ENCODE measurements at regions of chr3 and their contacts with region 1.

Region 1: DNA sequence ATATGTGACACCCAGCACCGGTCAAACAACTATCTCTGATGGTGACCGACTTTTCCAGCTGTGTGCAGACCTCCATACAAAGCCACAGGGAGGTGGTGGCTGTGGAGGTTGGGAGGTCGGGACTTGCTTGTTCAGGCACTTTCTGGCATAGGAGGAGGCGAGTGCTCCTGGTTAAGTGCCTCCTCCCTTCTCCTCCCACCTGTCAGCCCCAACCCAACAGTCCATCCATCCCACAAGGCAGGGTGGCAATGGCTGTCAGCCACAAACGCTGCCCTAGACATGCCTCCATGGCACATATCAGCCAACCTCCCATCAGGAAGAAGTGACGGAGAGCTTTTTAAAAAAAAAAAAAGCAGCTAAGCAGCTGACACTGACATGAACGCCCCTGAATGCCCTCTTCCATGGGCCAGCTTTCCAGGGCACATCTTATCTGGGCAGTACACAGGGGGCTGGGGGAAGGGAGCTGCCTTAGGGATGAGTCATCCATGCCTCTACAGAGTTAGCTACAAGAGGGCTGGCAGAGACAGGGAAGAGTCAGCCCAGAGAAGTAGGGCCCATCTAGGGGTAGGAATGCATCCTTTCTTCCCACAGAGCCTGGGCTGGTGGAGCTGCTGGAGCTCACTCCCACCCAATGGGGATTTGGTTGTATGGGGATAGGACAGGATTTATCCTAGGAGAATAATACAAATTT is 41.2 kb downstream of the CCDC12 start:
- DNase-seq: peak; percentile 95
- H3K4me3 ChIP-seq: no peak overlapping the region
- H3K27ac ChIP-seq: peak overlapping the region; percentile 78 to 91 (median 84)
- H3K4me1 ChIP-seq: peaks cover 0 to 97% (median 86%) of the 10 kb centered on the region in 4 donors
- H3K27me3 ChIP-seq: no peaks in the 10 kb centered on the region
- CTCF ChIP-seq: peak; percentile 50 to 82 (median 70)
- EP300 ChIP-seq: peak in 3 of 4 donors; percentile 21 to 67 (median 41)
- POLR2A ChIP-seq: no peak

Region 2: DNA sequence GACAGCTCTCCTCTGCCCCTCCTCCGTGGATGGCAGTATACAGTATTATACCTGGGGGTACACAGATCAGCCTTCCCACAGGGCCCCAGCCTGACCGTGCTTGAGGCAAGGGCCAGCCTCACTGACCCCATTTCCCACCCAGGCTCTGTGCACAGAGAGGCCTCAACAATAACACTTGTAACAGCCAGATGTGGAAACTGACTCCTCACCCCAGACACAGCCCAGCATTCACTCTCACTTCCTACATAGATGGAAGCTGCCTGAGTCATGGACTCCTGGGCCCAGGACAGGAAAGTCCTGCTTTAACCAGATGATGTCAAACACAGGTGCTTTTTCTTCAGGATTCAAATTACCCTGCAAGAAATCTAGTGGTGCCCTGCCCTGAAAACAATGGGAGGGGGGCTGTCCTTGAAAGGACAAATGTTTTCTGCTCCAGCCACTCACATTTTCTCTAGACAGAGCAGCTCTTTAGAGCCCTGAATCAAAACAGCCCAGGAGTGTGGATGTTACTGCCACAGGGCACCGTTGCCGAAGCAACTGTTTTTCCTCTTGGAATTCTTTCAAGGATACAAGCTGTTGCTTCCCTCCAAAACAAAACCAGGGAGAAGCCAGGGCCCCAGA is 24.9 kb after region 1 on chr3:
- intact Hi-C with region 1: loop called (anchors 2 kb)
- DNase-seq: no peak
- H3K4me3 ChIP-seq: no peak overlapping the region
- H3K27ac ChIP-seq: peak overlapping the region; percentile 62 to 86 (median 74)
- H3K4me1 ChIP-seq: peaks cover 0 to 73% (median 67%) of the 10 kb centered on the region in 4 donors
- H3K27me3 ChIP-seq: no peaks in the 10 kb centered on the region
- CTCF ChIP-seq: no peak
- EP300 ChIP-seq: no peak
- POLR2A ChIP-seq: no peak

Region 3: DNA sequence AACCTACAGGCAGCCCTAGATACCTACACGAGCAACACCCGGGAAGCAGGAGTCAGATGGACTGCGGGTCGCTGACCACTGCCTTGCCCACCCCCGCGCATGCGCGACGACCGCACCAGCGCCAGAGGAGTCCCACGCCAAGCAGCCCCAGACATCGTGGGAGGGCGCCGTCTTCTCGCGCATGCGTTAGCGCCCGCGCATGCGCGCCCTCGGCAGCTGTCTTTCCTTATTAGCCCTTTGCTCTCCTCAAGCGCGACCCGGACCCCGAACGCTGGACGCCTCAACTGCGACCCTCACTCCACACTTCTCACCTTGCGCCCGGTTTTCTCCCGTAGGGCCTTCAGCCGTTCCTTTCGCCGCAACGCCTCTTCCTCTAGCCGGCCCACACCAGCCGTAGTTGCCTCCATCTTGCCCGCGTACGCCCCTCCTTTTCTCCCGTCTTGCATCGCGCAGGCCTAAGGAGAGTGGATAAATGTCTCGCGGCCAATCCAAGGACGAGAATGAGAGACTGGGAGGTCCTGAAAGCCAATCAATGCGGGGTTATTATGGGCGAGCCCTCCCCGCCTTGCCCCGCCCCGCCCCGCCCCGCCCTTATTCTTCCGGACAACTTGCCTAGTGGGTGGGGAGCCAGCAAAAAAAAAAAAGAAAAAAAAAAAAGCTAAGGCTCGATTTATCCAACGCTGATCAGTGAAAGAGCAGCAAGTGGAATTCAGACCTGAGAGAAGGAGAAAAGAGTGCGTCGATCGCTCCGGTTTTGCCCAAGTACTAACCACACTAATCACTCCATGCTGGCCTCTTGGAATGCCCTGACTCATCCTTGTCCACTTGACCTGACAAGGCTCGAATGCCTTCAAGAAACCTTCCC is 41.2 kb after region 1 on chr3 and contains the start of gene CCDC12:
- intact Hi-C with region 1: loop called (anchors 1 kb)
- DNase-seq: peak; percentile 99
- H3K4me3 ChIP-seq: peak within 1 kb of the TSS; percentile 47 to 86 (median 80)
- H3K27ac ChIP-seq: peak within 1 kb of the TSS; percentile 91 to 95 (median 94)
- H3K4me1 ChIP-seq: peaks cover 0 to 71% (median 56%) of the 10 kb centered on the region in 4 donors
- H3K27me3 ChIP-seq: no peaks in the 10 kb centered on the region
- CTCF ChIP-seq: no peak
- EP300 ChIP-seq: no peak
- POLR2A ChIP-seq: peak; percentile 80 to 95
- total RNA-seq, gene CCDC12: 33.1 to 41.0 (median 36.6) TPM

Region 4: GRCh38 chr3:47009225-47010110 is 74.2 kb after region 1 on chr3:
- intact Hi-C with region 1: loop called (anchors 2 kb)
- DNase-seq: peak; percentile 97
- H3K4me3 ChIP-seq: peak overlapping the region; percentile 55 to 67 (median 57)
- H3K27ac ChIP-seq: peak overlapping the region; percentile 86 to 93 (median 90)
- H3K4me1 ChIP-seq: peaks cover 0 to 15% (median 9%) of the 10 kb centered on the region in 4 donors
- H3K27me3 ChIP-seq: no peaks in the 10 kb centered on the region
- CTCF ChIP-seq: no peak
- EP300 ChIP-seq: no peak
- POLR2A ChIP-seq: peak; percentile 85 to 87

Region 5: DNA sequence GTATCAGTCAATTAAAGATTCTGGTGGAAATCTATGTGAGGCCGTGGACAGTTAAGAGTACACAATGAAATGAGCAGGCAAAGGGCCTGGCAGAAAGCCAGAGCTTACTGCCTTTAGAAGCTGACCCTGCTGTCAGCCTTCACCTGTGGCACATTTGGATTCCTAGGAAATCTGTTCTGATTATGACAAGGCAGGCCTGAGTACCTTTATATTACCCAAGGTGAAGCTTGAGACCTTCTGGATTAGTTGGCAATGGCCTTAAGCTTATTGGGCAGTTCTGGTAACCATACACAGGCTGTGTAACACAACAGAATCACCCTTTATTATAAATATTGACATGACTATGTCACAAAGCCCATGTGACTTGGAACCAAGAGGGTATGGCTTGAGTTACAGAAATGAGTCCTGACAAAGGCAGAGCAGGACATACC is 87.3 kb after region 1 on chr3:
- intact Hi-C with region 1: no loop called
- DNase-seq: peak; percentile 66
- H3K4me3 ChIP-seq: no peak overlapping the region
- H3K27ac ChIP-seq: peak overlapping the region; percentile 30 to 51 (median 43)
- H3K4me1 ChIP-seq: peaks cover 0 to 31% (median 29%) of the 10 kb centered on the region in 4 donors
- H3K27me3 ChIP-seq: no peaks in the 10 kb centered on the region
- CTCF ChIP-seq: no peak
- EP300 ChIP-seq: no peak
- POLR2A ChIP-seq: no peak

Region 6: DNA sequence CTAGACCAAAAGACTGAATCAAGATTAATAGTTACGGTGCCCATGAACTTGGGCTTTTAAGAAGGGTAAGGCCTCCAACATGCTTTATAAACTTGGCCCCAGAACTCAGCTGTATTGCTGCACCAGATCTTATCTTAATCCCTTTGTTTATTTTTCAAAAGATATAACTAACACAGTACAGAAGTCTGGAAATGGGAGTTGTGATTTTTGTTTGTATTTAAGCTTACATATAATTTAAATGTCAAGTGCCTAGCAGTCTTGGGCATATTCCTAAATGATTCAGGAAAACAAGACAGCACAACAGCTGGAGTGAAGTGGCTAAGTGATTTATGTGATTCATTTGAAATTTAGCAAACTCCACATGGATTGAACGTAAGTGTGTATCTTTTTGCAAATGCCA is 100.3 kb after region 1 on chr3:
- intact Hi-C with region 1: no loop called
- DNase-seq: no peak
- H3K4me3 ChIP-seq: no peak overlapping the region
- H3K27ac ChIP-seq: no peak overlapping the region
- H3K4me1 ChIP-seq: peaks cover 0 to 6% (median 2%) of the 10 kb centered on the region in 4 donors
- H3K27me3 ChIP-seq: no peaks in the 10 kb centered on the region
- CTCF ChIP-seq: no peak
- EP300 ChIP-seq: no peak
- POLR2A ChIP-seq: no peak

Region 7: DNA sequence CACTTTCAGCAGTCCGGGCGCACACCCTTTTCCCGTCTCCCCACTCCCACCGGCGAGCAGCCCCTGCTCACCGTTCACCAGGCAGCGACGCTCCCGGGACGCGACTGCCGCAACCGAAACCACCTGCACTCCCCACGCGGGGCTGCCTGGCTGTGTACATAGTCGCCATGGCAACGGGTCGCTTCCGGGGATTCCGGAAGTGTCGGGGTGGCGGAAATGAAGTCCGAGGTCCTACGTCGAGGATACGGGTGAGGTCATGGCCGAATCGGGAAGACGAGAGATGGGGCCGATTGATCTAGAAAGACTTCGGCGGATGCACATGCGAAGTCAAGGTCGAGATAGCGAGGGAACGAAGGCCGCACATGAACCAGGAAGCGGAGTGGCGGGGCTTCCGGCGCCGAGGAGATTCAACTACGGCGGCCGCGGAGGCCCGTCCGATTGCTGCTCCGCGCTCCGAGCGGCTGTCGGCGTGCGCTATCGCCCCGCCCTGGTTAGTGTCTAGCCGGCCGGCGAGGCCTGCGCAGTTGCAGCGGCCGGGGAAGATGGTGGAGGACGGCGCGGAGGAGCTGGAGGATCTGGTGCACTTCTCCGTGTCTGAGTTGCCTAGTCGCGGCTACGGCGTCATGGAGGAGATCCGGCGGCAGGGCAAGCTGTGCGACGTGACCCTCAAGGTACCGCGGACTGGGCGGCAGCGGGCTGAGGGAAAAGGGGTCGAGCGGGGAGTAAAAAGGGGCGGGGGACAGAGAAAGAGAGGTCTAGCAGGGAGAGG is 347.3 kb after region 1 on chr3 and contains the starts of genes KIF9 and KLHL18:
- intact Hi-C with region 1: loop called (anchors 5 kb)
- DNase-seq: peak; percentile 97
- H3K4me3 ChIP-seq: peak within 1 kb of the TSS; percentile 73 to 91 (median 85)
- H3K27ac ChIP-seq: peak within 1 kb of the TSS; percentile 85 to 96 (median 90)
- H3K4me1 ChIP-seq: peaks cover 0 to 46% (median 44%) of the 10 kb centered on the region in 4 donors
- H3K27me3 ChIP-seq: no peaks in the 10 kb centered on the region
- CTCF ChIP-seq: no peak
- EP300 ChIP-seq: peak in 2 of 4 donors; percentile 39 to 60
- POLR2A ChIP-seq: peak in 1 of 2 donors; percentile 60
- total RNA-seq, gene KIF9: 5.3 to 16.1 (median 9.0) TPM
- total RNA-seq, gene KLHL18: 10.3 to 33.8 (median 11.7) TPM

Region 8: GRCh38 chr3:47464588-47464987 is 529.3 kb after region 1 on chr3:
- intact Hi-C with region 1: no loop called
- DNase-seq: no peak
- H3K4me3 ChIP-seq: no peak overlapping the region
- H3K27ac ChIP-seq: no peak overlapping the region
- H3K4me1 ChIP-seq: peaks cover 0 to 3% (median 0%) of the 10 kb centered on the region in 4 donors
- H3K27me3 ChIP-seq: no peaks in the 10 kb centered on the region
- CTCF ChIP-seq: no peak
- EP300 ChIP-seq: no peak
- POLR2A ChIP-seq: no peak

Measured in sigmoid colon (tissue), 7 donors.